MCF 10A (cell line): ENCODE measurements at regions of chr9 and their contacts with region 1.

Region 1: GRCh38 chr9:115591584-115591984 is 473.6 kb upstream of the TNC start:
- DNase-seq: peak; percentile 98
- H3K4me3 Mint-ChIP-seq: no peak overlapping the region
- H3K27ac Mint-ChIP-seq: peak overlapping the region; percentile 94
- H3K4me1 Mint-ChIP-seq: peaks cover 45% of the 10 kb centered on the region
- H3K27me3 Mint-ChIP-seq: no peaks in the 10 kb centered on the region
- CTCF ChIP-seq: peak; percentile 82

Region 2: DNA sequence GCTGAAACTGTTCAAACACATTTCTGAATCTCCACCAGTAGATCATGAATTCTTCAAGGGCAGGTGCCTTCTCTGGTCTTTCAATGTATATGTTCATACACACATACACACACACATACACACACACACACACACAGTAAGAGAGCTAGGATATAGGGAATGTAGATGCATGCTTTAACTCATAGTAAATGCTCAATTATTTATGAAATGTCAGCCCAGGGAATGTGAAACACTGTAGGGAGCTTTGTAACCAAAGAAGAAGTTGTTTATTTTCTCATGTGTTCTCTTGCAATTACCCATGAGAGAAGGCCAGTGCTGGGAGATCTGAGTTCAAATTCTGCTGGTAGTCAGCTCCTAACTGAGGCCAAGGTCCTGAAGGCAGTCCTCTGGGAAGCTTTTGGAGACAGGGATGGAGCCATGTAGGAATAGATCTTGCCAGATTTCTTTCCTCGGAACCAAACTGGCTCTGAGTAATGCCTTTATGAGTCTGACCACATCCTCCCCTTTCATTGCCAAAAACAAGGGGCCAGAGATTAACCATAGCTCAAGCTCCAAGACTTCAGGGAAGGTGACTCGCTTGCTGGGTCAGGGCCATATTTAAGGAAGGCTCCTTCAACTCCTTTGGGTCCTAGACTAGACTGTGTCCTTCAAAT is 13.4 kb after region 1 on chr9:
- CTCF ChIA-PET with region 1: interaction called, 74 read pairs
- POLR2A ChIA-PET with region 1: interaction called, 3 read pairs
- intact Hi-C with region 1: no loop called
- DNase-seq: peak; percentile 86
- H3K4me3 Mint-ChIP-seq: no peak overlapping the region
- H3K27ac Mint-ChIP-seq: no peak overlapping the region
- H3K4me1 Mint-ChIP-seq: no peaks in the 10 kb centered on the region
- H3K27me3 Mint-ChIP-seq: no peaks in the 10 kb centered on the region
- CTCF ChIP-seq: no peak

Region 3: GRCh38 chr9:115672477-115673316 is 81.1 kb after region 1 on chr9:
- CTCF ChIA-PET with region 1: interaction called, 39 read pairs
- POLR2A ChIA-PET with region 1: no interaction called
- intact Hi-C with region 1: loop called (anchors 1 kb)
- DNase-seq: peak; percentile 91
- H3K4me3 Mint-ChIP-seq: no peak overlapping the region
- H3K27ac Mint-ChIP-seq: peak overlapping the region; percentile 99
- H3K4me1 Mint-ChIP-seq: peaks cover 52% of the 10 kb centered on the region
- H3K27me3 Mint-ChIP-seq: no peaks in the 10 kb centered on the region
- CTCF ChIP-seq: no peak

Region 4: DNA sequence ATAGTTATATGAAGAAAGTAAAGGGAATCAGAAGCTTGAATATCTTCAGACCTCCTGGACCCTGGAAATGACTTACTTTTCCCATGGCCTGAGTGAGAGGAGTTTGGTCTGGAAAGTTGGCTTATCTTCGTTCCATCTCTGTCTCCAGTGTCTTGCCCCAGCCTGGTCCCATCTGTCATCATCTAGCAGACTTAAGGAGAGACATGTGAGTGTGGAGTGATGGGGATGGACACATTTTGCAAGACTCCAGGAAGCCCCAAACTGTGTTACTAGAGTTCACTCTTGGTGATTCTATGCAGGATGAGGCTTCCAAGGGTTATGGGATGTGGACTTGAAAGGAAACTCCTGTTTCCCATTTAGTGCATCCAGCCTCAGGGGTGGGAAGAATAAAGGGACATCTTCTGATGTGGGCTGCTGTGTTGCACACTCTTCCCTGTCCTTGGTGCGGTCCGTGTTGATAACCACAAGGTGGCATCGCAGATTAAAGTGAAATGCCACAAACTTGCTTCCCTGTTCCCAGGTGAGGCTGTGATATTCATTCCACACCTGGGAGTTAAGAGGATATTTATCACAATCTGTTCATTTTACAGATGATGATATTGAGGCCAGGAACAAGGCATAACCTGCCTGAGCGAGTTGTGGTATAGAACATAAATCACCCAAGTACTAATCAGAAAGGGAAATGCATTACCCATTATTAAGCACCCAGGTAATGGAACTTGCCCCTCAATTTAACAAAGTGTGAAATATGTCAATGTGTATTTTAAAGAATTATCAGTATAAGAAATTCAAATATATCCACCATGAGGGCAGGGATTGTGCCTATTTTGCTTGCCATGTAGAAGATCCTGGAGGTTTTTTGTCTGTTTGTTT is 292.1 kb after region 1 on chr9:
- CTCF ChIA-PET with region 1: interaction called, 81 read pairs
- POLR2A ChIA-PET with region 1: no interaction called
- intact Hi-C with region 1: loop called (anchors 1 kb)
- DNase-seq: peak; percentile 86
- H3K4me3 Mint-ChIP-seq: no peak overlapping the region
- H3K27ac Mint-ChIP-seq: no peak overlapping the region
- H3K4me1 Mint-ChIP-seq: peaks cover 6% of the 10 kb centered on the region
- H3K27me3 Mint-ChIP-seq: no peaks in the 10 kb centered on the region
- CTCF ChIP-seq: peak; percentile 74

Region 5: DNA sequence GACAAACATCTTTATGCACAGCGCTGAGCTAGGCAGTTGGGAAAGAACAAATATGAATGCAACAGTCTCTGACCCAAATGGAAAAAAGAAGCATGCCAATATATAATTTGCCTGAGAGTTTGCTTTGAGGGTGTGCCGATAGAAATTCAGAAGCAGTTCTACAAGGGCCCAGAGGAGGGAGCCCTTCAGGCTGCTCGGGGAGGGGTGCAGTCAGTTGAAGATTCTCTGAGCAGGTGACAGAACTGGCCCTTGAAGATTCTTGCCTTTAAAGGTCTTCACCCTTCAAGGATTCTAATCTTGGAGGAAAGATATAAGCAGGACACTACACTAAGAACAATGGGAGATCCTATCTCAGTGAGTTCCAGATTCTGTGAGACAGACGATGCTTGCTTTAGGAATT is 558.3 kb after region 1 on chr9:
- CTCF ChIA-PET with region 1: interaction called, 28 read pairs
- POLR2A ChIA-PET with region 1: interaction called, 4 read pairs
- intact Hi-C with region 1: loop called (anchors 2 kb)
- DNase-seq: peak; percentile 51
- H3K4me3 Mint-ChIP-seq: no peak overlapping the region
- H3K27ac Mint-ChIP-seq: no peak overlapping the region
- H3K4me1 Mint-ChIP-seq: peaks cover 24% of the 10 kb centered on the region
- H3K27me3 Mint-ChIP-seq: no peaks in the 10 kb centered on the region
- CTCF ChIP-seq: peak; percentile 47

Region 6: DNA sequence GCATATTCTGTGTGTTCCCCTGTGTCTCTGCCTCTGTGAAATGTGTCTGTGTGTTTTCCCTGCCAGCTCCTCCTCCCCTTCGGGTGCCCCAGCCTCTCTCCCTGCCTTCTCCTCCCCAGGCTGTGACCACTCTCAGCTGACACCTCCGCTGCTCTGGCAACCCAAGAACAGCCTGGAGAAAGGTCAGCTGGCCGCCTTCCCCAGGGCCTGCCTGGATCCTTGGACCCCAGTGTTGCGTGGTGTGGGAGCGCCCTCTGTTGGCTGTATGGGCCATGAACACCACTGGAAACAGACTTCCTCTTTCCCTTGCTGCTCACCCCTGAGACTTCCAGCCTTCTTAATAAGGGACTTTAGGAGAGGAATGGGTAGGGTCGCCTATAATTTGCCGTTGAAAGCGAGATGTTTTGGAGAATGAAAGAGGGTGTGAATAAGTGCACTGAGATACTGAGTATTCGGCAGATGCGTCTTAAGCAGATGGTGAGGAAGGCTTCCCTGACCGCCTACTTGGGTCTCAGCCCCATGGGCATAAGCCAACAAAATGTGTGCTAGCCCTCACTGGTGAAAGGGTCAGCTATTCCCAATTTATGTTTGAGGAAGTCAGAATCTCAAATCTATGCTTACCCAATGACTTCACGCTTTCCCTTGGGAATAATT is 980.6 kb after region 1 on chr9:
- CTCF ChIA-PET with region 1: interaction called, 154 read pairs
- POLR2A ChIA-PET with region 1: no interaction called
- intact Hi-C with region 1: loop called (anchors 1 kb)
- DNase-seq: peak; percentile 80
- H3K4me3 Mint-ChIP-seq: no peak overlapping the region
- H3K27ac Mint-ChIP-seq: no peak overlapping the region
- H3K4me1 Mint-ChIP-seq: peaks cover 4% of the 10 kb centered on the region
- H3K27me3 Mint-ChIP-seq: no peaks in the 10 kb centered on the region
- CTCF ChIP-seq: peak; percentile 95

Region 7: GRCh38 chr9:116661037-116661954 is 1069.7 kb after region 1 on chr9:
- CTCF ChIA-PET with region 1: interaction called, 122 read pairs
- POLR2A ChIA-PET with region 1: no interaction called
- intact Hi-C with region 1: loop called (anchors 1 kb)
- DNase-seq: peak; percentile 73
- H3K4me3 Mint-ChIP-seq: no peak overlapping the region
- H3K27ac Mint-ChIP-seq: no peak overlapping the region
- H3K4me1 Mint-ChIP-seq: peaks cover 9% of the 10 kb centered on the region
- H3K27me3 Mint-ChIP-seq: no peaks in the 10 kb centered on the region
- CTCF ChIP-seq: peak; percentile 76